AG04449 (cell line): ENCODE measurements at regions of chr1 and their contacts with region 1.

Region 1: GRCh38 chr1:172398970-172399755 is 21.3 kb upstream of the C1orf105 start:
- DNase-seq: peak; percentile 89
- H3K4me3 ChIP-seq: no peak overlapping the region
- CTCF ChIP-seq: peak; percentile 23

Region 2: GRCh38 chr1:172089768-172090510 is 309.2 kb before region 1 on chr1:
- CTCF ChIA-PET with region 1: interaction called, 18 read pairs
- POLR2A ChIA-PET with region 1: no interaction called
- DNase-seq: no peak
- H3K4me3 ChIP-seq: no peak overlapping the region
- CTCF ChIP-seq: peak; percentile 70

Region 3: GRCh38 chr1:172254521-172255222 is 144.5 kb before region 1 on chr1:
- CTCF ChIA-PET with region 1: interaction called, 14 read pairs
- POLR2A ChIA-PET with region 1: no interaction called
- DNase-seq: peak; percentile 73
- H3K4me3 ChIP-seq: no peak overlapping the region
- CTCF ChIP-seq: no peak

Region 4: DNA sequence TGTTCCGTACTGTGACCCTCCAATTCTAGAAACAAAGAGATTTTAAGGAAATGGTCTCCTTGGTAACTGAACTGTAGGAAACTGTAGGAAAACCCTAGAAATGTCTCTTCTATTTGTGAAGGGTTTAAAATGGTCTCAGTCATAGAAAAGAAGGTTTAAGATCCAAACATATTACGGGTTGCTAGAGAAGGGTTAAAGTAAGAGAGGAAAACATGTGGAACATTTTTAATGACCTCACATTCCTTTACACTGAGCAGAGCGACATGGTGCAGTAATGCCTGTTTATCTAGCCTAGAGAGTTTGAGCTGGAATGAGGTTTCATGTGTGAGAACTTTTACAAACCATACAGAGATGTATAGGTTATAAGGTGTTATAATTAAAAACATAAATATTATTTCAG is 15.6 kb before region 1 on chr1:
- CTCF ChIA-PET with region 1: interaction called, 14 read pairs
- POLR2A ChIA-PET with region 1: interaction called, 3 read pairs
- DNase-seq: peak; percentile 54
- H3K4me3 ChIP-seq: no peak overlapping the region
- CTCF ChIP-seq: no peak

Region 5: GRCh38 chr1:172588296-172589291 is 189.4 kb after region 1 on chr1:
- CTCF ChIA-PET with region 1: no interaction called
- POLR2A ChIA-PET with region 1: no interaction called
- DNase-seq: peak; percentile 38
- H3K4me3 ChIP-seq: no peak overlapping the region
- CTCF ChIP-seq: no peak

Region 6: GRCh38 chr1:172638885-172639831 is 240.0 kb after region 1 on chr1:
- CTCF ChIA-PET with region 1: no interaction called
- POLR2A ChIA-PET with region 1: no interaction called
- DNase-seq: peak; percentile 84
- H3K4me3 ChIP-seq: peak overlapping the region; percentile 15
- CTCF ChIP-seq: no peak